AG04449 (cell line): ENCODE measurements at regions of chr16 and their contacts with region 1.

Region 1: GRCh38 chr16:11356573-11357331 is 11.5 kb downstream of the RMI2 start:
- DNase-seq: no peak
- H3K4me3 ChIP-seq: no peak overlapping the region
- CTCF ChIP-seq: peak; percentile 81

Region 2: GRCh38 chr16:10971560-10971961 is 385.2 kb before region 1 on chr16:
- CTCF ChIA-PET with region 1: interaction called, 10 read pairs
- POLR2A ChIA-PET with region 1: no interaction called
- DNase-seq: peak; percentile 75
- H3K4me3 ChIP-seq: no peak overlapping the region
- CTCF ChIP-seq: peak; percentile 59

Region 3: GRCh38 chr16:11345040-11345862 is 11.5 kb before region 1 on chr16 and contains the start of gene RMI2:
- CTCF ChIA-PET with region 1: interaction called, 30 read pairs
- POLR2A ChIA-PET with region 1: no interaction called
- DNase-seq: no peak
- H3K4me3 ChIP-seq: peak within 1 kb of the TSS; percentile 60
- CTCF ChIP-seq: no peak